ENCODE measurements at regions of chr14 and their contacts with region 1.

Region 1: GRCh38 chr14:56474419-56475022 is 105.1 kb upstream of the TMEM260 start:
- DNase-seq: no peak

Region 2: GRCh38 chr14:55438066-55438683 is 1036.3 kb before region 1 on chr14:
- intact Hi-C with region 1: loop called (anchors 5 kb)
- DNase-seq: no peak

Region 3: DNA sequence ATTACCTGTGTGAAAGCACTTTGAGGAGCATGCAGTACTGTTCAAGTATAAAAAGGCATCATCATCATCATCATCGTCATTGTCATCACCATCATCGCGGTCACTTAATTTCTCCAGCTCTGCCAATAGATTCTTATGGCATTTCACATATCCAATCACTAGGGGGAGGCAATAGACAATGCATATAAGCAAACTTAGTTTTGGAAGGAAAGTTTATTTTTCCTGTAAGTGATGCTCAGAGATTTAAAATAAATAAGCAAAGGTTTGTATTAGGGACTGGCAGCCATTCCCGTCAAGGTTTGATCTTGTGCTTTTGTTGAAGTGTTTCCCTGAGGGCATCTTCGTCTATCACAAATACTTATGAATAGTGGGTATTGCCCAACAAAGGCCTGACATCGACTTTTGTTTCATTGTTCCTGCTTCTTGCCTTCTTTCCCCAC is 767.1 kb before region 1 on chr14:
- intact Hi-C with region 1: loop called (anchors 10 kb)
- DNase-seq: no peak

Region 4: DNA sequence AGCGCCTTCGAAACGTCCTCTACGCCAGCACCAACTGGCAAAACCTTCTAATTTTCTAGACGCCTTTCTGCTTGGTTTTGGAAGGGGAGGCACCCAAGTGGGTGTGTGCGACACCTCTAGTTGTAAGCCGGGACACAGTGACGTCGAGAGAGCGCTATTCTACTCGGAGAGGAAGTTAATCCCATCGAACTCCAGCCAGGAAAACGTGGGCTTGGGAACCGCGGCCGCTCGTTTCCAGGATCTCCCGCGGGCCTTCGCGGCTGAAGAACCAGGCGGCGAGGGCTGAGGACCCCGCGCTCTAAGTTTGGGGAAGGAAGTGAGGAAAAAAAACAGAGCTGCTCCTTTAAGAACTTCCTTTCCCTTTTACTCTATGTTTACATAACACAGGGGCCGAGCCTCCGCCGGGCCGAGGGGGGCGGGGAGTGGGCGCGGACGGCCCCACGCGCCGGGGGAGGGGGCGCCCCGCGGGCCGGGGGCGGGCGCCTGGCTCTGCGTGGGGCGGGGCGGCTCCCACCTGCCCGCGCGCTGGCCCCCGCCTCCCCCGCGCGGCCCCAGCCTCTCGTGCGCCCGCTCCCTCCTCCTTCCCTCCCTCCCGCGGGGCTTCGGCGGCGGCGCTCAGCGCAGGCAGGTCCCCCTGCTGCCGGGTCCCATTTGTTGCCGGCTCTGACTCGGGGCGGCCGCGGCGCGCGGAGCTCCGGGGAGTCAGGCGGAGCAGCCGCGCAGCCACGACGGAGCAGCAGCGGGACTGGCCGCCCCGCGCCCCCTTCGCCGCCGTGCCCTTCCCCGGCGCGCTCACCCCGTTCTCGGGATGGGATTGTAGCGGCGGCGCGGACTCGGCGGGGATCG is 356.5 kb before region 1 on chr14 and contains the start of gene PELI2:
- intact Hi-C with region 1: no loop called
- DNase-seq: peak; percentile 89
- total RNA-seq, gene PELI2: 3.4 TPM

Measured in cardiac septum (tissue), 1 donor.